ENCODE measurements at regions of chr7 and their contacts with region 1.

Region 1: GRCh38 chr7:130292682-130293257 is at the start of gene CPA4:
- DNase-seq: peak in 2 of 4 donors; percentile 35 to 52
- ATAC-seq: no peak
- H3K4me3 ChIP-seq: no peak within 1 kb of the TSS
- H3K27ac ChIP-seq: peak within 1 kb of the TSS; percentile 63 to 89 (median 77)
- H3K4me1 ChIP-seq: peaks cover 26% of the 10 kb centered on the region
- H3K27me3 ChIP-seq: no peaks in the 10 kb centered on the region
- CTCF ChIP-seq: no peak
- POLR2A ChIP-seq: no peak
- total RNA-seq, gene CPA4: 9.6 to 10.2 TPM

Region 2: DNA sequence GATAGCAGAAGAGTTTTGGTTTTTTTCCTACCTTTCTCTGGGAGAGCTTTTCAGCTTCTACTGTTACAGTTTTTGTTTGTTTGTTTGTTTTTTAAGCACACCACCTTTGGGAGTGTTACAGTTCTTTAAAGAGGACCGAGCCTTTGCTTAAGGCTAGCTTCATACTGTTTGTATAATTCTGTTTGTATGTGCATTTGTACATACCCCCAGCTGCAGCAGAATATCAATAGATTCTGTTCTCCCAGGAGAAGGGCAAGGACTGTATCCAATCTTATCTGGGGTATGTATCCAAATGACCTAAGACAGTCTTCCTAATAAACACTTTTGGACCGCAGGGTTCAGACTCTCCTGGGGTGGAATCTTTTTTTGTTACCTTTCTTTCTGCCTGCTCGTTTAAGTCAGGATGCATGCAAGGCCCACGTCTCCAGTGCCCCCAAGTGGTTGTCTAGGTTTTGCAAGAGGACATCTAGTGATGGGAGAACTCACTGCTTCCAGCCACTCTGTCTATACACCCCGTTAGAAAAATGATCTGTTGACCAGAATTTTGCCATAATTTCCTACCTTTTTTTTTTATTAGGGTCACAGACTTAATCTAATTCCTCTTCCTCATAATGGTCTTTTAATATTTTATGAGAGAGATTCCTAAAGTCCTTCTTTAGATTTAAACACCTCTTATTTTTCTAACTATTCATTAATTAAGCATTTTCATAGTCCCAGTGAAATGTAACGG is 657.3 kb before region 1 on chr7:
- intact Hi-C with region 1: no loop called
- DNase-seq: peak; percentile 66 to 78 (median 74)
- ATAC-seq: peak; percentile 81
- H3K4me3 ChIP-seq: no peak overlapping the region
- H3K27ac ChIP-seq: no peak overlapping the region
- H3K4me1 ChIP-seq: peaks cover 9% of the 10 kb centered on the region
- H3K27me3 ChIP-seq: no peaks in the 10 kb centered on the region
- CTCF ChIP-seq: peak; percentile 30 to 76 (median 69)
- POLR2A ChIP-seq: no peak

Region 3: DNA sequence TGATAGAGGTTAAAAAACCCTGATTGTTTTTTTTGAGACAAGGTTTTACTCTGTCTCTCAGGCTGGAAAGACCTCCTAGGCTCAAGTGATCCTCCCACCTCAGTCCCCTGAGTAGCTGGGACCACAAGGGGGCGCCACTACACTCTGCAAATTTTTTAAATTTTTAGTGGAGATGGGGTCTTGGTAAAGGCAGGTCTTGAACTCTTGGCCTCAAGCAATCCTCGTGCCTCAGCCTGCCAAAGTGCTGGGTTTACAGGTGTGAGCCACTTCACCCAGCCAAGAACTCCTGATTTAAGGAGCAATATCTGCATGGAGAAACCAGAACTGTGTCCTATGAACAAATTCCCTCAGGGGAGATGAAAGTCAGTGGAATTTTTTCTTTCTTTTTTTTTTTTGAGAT is 229.7 kb before region 1 on chr7:
- intact Hi-C with region 1: no loop called
- DNase-seq: peak; percentile 32 to 57 (median 46)
- ATAC-seq: no peak
- H3K4me3 ChIP-seq: no peak overlapping the region
- H3K27ac ChIP-seq: no peak overlapping the region
- H3K4me1 ChIP-seq: no peaks in the 10 kb centered on the region
- H3K27me3 ChIP-seq: no peaks in the 10 kb centered on the region
- CTCF ChIP-seq: peak; percentile 39 to 65 (median 51)
- POLR2A ChIP-seq: no peak

Region 4: DNA sequence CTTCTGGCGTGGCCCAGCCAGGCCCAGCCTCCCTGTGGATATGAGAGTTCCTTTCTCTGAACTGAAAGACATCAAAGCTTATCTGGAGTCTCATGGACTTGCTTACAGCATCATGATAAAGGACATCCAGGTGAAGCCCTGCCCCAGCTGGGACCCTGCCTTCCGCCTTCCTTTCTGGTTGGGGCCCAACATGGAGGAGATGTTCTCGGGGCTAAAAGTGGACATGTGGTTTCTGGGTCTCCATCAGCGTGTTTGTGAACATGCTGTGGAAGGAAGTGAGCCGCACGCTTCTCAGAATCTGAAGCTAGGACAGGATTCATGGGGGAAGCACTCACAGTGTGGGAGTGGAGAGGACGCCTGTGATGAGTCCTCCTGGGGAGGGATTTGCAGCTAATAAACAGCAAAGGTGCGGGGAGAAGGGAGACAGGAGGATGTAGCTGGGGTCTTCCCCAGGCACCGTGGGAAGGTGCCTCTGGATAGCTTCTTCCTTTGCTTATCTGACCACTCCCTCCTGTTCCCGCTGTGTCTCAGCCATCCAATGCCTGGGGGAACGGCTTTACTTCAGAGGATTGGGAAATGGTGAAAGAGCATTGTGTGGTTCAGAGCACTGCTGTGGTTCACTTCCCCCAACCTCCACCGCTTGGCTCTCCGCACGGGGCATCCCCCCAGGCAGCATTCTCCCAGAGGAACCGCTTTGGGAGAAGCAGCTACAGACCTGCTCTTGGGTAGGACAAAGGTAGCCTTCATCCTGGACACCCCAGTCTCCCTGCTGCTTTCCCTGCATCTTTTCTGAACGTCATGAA is 57.4 kb after region 1 on chr7:
- intact Hi-C with region 1: loop called (anchors 10 kb)
- DNase-seq: no peak
- ATAC-seq: no peak
- H3K4me3 ChIP-seq: no peak overlapping the region
- H3K27ac ChIP-seq: no peak overlapping the region
- H3K4me1 ChIP-seq: no peaks in the 10 kb centered on the region
- H3K27me3 ChIP-seq: no peaks in the 10 kb centered on the region
- CTCF ChIP-seq: no peak
- POLR2A ChIP-seq: no peak

Measured in body of pancreas (tissue), 4 donors.